ENCODE measurements at regions of chr6 and their contacts with region 1.

Region 1: GRCh38 chr6:84095156-84095555 is 61.6 kb downstream of the MRAP2 start:
- DNase-seq: peak in 1 of 2 experiments; percentile 43
- H3K4me3 ChIP-seq: no peak overlapping the region
- H3K4me3 Mint-ChIP-seq: no peak overlapping the region
- H3K27ac Mint-ChIP-seq: no peak overlapping the region
- H3K4me1 ChIP-seq: peaks cover 8% of the 10 kb centered on the region
- H3K4me1 Mint-ChIP-seq: peaks cover 19% of the 10 kb centered on the region
- H3K27me3 ChIP-seq: no peaks in the 10 kb centered on the region
- H3K27me3 Mint-ChIP-seq: no peaks in the 10 kb centered on the region
- CTCF ChIP-seq: peak in 1 of 2 experiments; percentile 1

Region 2: GRCh38 chr6:84082689-84083265 is 12.4 kb before region 1 on chr6:
- CTCF ChIA-PET with region 1: no interaction called
- POLR2A ChIA-PET with region 1: no interaction called
- intact Hi-C with region 1: no loop called
- DNase-seq: peak in 1 of 2 experiments; percentile 16
- H3K4me3 ChIP-seq: no peak overlapping the region
- H3K4me3 Mint-ChIP-seq: peak overlapping the region; percentile 42
- H3K27ac Mint-ChIP-seq: peak overlapping the region; percentile 64
- H3K4me1 ChIP-seq: peaks cover 20% of the 10 kb centered on the region
- H3K4me1 Mint-ChIP-seq: peaks cover 11% of the 10 kb centered on the region
- H3K27me3 ChIP-seq: no peaks in the 10 kb centered on the region
- H3K27me3 Mint-ChIP-seq: no peaks in the 10 kb centered on the region
- CTCF ChIP-seq: no peak

Region 3: GRCh38 chr6:84135291-84135690 is 40.1 kb after region 1 on chr6:
- CTCF ChIA-PET with region 1: no interaction called
- POLR2A ChIA-PET with region 1: no interaction called
- intact Hi-C with region 1: no loop called
- DNase-seq: no peak
- H3K4me3 ChIP-seq: no peak overlapping the region
- H3K4me3 Mint-ChIP-seq: no peak overlapping the region
- H3K27ac Mint-ChIP-seq: no peak overlapping the region
- H3K4me1 ChIP-seq: no peaks in the 10 kb centered on the region
- H3K4me1 Mint-ChIP-seq: no peaks in the 10 kb centered on the region
- H3K27me3 ChIP-seq: no peaks in the 10 kb centered on the region
- H3K27me3 Mint-ChIP-seq: no peaks in the 10 kb centered on the region
- CTCF ChIP-seq: no peak

Region 4: DNA sequence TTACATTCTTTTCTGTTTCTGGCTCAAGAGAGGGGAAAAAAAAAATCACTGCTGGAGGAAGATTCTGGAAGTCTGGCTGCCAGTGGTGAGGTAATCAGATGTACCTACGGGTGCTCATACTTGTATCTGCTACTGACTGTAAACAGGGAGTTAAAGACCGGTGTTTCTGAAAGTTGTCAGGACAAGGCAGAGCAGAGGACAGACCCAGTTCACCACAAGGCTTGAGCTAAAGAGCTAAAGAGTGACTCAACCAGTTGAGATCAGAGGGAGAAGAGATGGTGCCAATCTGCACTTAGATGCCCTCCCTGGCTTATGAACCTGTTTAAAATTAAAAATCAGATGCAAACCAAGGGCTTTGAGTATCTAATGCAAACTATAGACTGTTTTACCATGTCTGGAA is 76.9 kb after region 1 on chr6:
- CTCF ChIA-PET with region 1: no interaction called
- POLR2A ChIA-PET with region 1: no interaction called
- intact Hi-C with region 1: loop called (anchors 1 kb)
- DNase-seq: peak in 1 of 2 experiments; percentile 1
- H3K4me3 ChIP-seq: no peak overlapping the region
- H3K4me3 Mint-ChIP-seq: peak overlapping the region; percentile 43
- H3K27ac Mint-ChIP-seq: peak overlapping the region; percentile 90
- H3K4me1 ChIP-seq: peaks cover 38% of the 10 kb centered on the region
- H3K4me1 Mint-ChIP-seq: peaks cover 23% of the 10 kb centered on the region
- H3K27me3 ChIP-seq: no peaks in the 10 kb centered on the region
- H3K27me3 Mint-ChIP-seq: no peaks in the 10 kb centered on the region
- CTCF ChIP-seq: no peak